Body of pancreas (tissue), 4 donors: ENCODE measurements at regions of chr17 and their contacts with region 1.

Region 1: DNA sequence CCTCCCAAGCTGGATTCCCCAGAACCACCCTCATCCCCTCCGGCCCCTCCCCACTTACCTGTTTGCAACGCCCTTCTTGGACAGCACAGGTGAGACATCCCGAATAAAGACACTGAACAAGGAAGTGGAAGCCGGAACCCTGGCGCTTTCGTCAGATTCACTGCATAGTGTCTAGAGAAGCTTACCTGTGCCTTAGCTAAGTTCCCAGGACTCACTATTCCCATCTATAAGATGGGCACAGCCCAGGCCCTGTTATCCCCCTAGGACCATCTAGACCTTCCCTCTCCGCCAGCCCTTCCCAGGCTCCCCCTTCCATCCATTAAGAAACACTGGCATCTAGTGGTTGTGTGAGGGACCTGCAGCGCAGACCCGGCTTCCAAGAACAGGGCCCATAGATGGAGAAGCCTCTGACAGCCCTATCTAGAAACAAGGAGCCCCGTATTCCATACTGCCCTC is 26.9 kb upstream of the RPL38 start:
- DNase-seq: peak; percentile 59 to 72 (median 64)
- ATAC-seq: peak; percentile 77
- H3K4me3 ChIP-seq: no peak overlapping the region
- H3K27ac ChIP-seq: no peak overlapping the region
- H3K4me1 ChIP-seq: no peaks in the 10 kb centered on the region
- H3K27me3 ChIP-seq: no peaks in the 10 kb centered on the region
- CTCF ChIP-seq: peak; percentile 56 to 77 (median 74)
- POLR2A ChIP-seq: no peak

Region 2: DNA sequence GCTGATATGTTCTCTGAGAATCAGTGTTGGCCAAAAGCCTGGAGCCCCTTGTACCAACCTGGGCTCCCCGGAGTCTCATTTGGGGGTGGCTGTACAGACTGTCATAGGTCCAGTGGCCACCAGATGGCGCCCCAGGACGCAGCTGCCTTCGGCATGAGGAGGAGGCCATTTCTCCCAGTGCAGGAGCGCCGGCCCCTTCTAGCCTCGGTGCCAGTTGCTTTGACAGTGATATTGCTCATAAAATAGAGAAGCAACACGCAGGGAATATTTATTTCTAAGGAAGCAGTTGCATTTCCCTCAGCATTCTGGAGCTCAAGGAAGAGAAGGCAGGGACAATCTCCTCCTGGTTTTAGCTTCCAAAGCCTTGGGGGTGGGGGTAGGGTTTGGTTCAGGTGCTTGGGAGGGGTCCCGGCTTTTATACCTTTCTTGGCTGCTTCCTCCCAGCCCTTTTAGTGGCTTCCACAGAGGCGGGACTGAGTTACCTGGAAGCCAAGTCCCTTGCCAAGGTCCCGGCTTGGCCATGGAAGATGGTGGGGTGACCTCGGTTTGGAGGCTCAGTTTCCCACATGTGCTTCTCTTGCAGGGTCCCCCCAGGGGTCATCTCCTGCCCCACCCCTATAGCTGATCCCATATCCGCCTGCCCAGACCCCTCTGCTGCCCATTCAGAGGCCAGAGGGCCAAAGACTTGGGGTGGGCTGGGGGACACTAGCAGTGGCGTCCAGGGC is 747.0 kb before region 1 on chr17:
- intact Hi-C with region 1: loop called (anchors 5 kb)
- DNase-seq: peak; percentile 82 to 86 (median 82)
- ATAC-seq: peak; percentile 79
- H3K4me3 ChIP-seq: no peak overlapping the region
- H3K27ac ChIP-seq: no peak overlapping the region
- H3K4me1 ChIP-seq: peaks cover 6% of the 10 kb centered on the region
- H3K27me3 ChIP-seq: no peaks in the 10 kb centered on the region
- CTCF ChIP-seq: peak; percentile 81 to 96 (median 91)
- POLR2A ChIP-seq: no peak